HEK293T (cell line): ENCODE measurements at regions of chr10 and their contacts with region 1.

Region 1: GRCh38 chr10:98134431-98135221 is at the start of gene R3HCC1L:
- DNase-seq: peak; percentile 95

Region 2: DNA sequence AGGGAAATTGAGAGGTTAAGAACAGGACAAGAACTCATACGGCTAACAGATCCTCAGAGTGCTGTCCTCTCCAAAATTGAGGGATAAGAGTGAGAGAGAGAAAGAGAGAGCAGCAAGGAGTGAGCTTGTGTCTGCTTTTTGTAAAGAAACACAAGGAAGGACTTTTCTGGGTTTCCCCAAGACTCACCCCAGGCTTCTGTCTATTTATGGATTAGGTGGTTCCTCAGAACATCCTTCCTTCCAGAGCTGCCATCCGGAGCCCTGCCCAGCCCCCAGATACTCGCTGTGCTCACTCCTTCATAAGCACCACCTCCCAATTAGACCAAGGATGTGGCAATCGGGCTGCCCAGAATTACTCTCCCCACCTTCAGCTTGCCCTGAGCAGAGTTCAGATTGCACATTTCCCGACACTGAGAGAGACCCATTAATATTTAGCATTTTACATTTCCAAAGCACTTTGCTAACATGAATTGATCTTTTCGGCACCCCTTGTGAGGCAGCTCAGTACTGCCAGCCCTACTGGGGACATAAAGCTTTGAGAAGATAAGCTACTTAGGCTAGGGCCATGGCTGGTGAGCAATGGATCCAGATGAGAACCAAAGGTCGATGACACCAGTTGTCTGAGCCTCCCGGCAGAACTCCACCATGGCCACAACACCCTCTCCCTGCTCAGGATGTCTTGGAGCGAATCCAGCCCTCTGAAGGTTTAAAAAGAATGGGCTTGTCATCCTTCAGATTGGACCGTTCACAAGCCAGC is 19.4 kb before region 1 on chr10:
- CTCF ChIA-PET with region 1: interaction called, 3 read pairs
- POLR2A ChIA-PET with region 1: interaction called, 11 read pairs
- DNase-seq: no peak